ENCODE measurements at regions of chr16 and their contacts with region 1.

Region 1: DNA sequence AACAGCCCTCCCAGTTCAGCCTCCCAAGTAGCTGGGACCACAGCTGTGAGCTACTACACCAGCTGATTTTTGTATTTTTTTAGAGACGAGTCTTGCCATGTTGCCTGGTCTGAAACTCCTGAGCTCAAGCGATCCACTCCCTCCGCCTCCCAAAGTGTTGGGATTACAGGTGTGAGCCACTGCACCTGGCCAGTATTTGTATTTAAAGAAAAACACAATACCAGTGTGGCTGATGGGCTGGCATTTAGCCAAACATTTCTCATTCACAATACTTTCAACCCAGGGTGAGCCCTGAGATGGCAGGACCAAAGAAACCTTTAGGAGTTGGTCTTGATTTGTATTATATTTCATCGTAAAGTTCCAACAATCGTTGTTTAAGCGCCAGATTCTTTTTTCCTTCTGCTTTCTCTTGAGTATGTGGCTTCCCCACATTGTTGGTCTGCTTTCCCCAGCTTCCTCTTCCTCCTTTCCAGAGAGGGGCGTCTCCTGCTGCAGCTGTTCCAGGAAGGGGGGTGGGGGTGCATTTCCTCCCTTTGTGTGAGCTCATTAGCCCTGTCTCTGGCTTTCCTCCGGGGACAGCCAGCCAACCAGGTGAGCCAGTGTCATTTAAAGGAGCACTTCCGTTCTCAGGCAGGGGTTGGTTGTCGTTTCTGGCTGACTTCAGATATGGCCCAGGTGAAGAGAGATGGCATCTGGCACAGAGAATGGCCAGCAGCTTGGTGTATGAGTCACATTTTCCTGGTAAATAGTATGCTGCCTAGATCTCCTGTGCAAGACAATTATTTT is 79.9 kb downstream of the GPRC5B start:
- DNase-seq: no peak
- ATAC-seq: no peak
- H3K4me3 ChIP-seq: no peak overlapping the region
- H3K27ac ChIP-seq: no peak overlapping the region
- H3K4me1 ChIP-seq: peaks cover 5% of the 10 kb centered on the region
- H3K27me3 ChIP-seq: no peaks in the 10 kb centered on the region
- CTCF ChIP-seq: no peak
- POLR2A ChIP-seq: no peak
- RAD21 ChIP-seq: no peak

Region 2: DNA sequence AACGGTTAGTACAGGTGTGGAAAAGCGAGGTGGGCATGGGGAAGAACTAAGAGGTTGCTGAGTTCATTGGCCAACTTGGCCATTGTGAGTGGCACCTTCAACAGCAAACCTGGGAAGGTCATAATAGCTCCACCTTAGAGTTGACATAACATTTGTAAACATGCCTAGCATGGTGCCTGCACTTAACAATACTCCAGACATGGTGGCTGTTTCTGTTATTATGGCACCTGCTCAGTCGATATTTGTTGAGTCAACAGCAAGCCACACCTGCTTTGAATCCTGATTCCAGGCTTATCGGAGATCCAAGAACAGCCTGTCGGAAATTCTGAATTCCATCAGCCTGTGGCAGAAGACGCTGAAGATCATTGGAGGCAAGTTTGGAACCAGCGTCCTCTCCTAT is 341.2 kb before region 1 on chr16:
- CTCF ChIA-PET with region 1: no interaction called
- POLR2A ChIA-PET with region 1: no interaction called
- dilution Hi-C with region 1: no loop called
- in situ Hi-C with region 1: no loop called
- intact Hi-C with region 1: no loop called
- DNase-seq: no peak
- ATAC-seq: no peak
- H3K4me3 ChIP-seq: no peak overlapping the region
- H3K27ac ChIP-seq: no peak overlapping the region
- H3K4me1 ChIP-seq: no peaks in the 10 kb centered on the region
- H3K27me3 ChIP-seq: no peaks in the 10 kb centered on the region
- CTCF ChIP-seq: no peak
- POLR2A ChIP-seq: no peak
- RAD21 ChIP-seq: no peak

Region 3: GRCh38 chr16:19621445-19621844 is 183.3 kb before region 1 on chr16:
- CTCF ChIA-PET with region 1: no interaction called
- POLR2A ChIA-PET with region 1: no interaction called
- dilution Hi-C with region 1: no loop called
- in situ Hi-C with region 1: no loop called
- intact Hi-C with region 1: no loop called
- DNase-seq: no peak
- ATAC-seq: no peak
- H3K4me3 ChIP-seq: no peak overlapping the region
- H3K27ac ChIP-seq: no peak overlapping the region
- H3K4me1 ChIP-seq: no peaks in the 10 kb centered on the region
- H3K27me3 ChIP-seq: no peaks in the 10 kb centered on the region
- CTCF ChIP-seq: no peak
- POLR2A ChIP-seq: no peak
- RAD21 ChIP-seq: no peak

Region 4: GRCh38 chr16:19753815-19754643 is 50.7 kb before region 1 on chr16:
- CTCF ChIA-PET with region 1: no interaction called
- POLR2A ChIA-PET with region 1: no interaction called
- dilution Hi-C with region 1: no loop called
- in situ Hi-C with region 1: no loop called
- intact Hi-C with region 1: loop called (anchors 5 kb)
- DNase-seq: peak; percentile 83
- ATAC-seq: peak; percentile 65
- H3K4me3 ChIP-seq: no peak overlapping the region
- H3K27ac ChIP-seq: peak overlapping the region; percentile 44; the same call in 1 of the 2 replicates
- H3K4me1 ChIP-seq: peaks cover 12% of the 10 kb centered on the region
- H3K27me3 ChIP-seq: no peaks in the 10 kb centered on the region
- CTCF ChIP-seq: no peak
- POLR2A ChIP-seq: no peak
- RAD21 ChIP-seq: no peak

Region 5: DNA sequence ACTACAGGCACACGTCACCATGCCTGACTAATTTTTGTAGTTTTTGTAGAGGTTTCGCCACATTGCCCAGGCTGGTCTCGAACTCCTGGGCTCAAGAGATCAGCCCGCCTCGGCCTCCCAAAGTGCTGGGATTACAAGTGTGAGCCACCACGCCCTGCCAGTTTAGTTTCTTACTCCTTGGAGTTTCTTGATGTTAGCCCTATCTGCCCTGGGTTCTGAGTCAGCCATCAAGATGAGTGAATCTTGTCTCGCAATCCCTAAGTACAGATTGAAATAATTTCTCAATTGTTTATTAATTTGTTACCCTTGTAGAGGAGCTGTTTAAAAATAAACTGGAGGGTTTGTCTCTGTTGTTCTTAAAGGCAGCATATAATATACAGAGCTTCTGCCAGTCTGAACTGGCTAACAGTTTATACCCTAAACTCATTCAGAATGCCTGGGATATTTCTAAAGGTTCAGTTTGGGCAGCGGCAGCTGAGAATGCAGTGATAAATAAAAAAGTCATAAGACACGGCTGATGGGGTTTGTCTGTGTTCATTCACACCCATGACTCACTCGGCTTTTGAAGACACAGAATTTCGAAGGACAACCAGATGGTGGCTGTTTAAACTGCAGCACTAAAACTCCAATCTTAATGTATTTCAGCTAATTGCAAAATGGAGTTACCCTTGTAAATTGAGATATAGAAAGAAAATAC is 40.4 kb after region 1 on chr16:
- CTCF ChIA-PET with region 1: interaction called, 4 read pairs
- POLR2A ChIA-PET with region 1: no interaction called
- dilution Hi-C with region 1: no loop called
- in situ Hi-C with region 1: no loop called
- intact Hi-C with region 1: loop called (anchors 1 kb)
- DNase-seq: peak; percentile 92
- ATAC-seq: peak; percentile 94
- H3K4me3 ChIP-seq: no peak overlapping the region
- H3K27ac ChIP-seq: peak overlapping the region; percentile 83
- H3K4me1 ChIP-seq: peaks cover 5% of the 10 kb centered on the region
- H3K27me3 ChIP-seq: no peaks in the 10 kb centered on the region; the same call in 1 of the 2 replicates
- CTCF ChIP-seq: no peak
- POLR2A ChIP-seq: no peak
- RAD21 ChIP-seq: 0 out of 2 replicates have a peak, but pooled peaks have one; percentile 5

Measured in IMR-90 (cell line).